Tibial artery (tissue), 4 donors: ENCODE measurements at regions of chrX and their contacts with region 1.

Region 1: DNA sequence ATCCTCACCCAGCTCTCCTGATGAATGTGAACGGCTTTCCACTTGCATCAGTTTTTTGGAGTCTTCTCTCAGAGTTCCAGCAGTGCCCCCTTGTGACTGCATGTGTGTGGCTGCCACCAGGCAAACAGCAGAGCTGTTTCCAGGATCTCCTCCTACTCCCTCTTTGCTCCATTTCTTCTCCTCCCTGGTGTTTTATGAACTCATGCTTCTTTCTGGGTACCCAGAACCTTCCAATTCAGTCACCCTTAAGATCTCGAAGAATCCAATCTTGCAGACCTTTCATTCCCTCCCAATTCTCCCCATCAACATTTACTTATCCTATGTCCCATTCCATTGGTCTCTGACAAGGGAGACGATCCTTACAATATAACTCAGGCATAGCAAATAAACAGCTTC is 6.8 kb upstream of the TCEANC start:
- DNase-seq: peak; percentile 58 to 67
- H3K4me3 ChIP-seq: no peak overlapping the region
- H3K27ac ChIP-seq: no peak overlapping the region
- H3K4me1 ChIP-seq: no peaks in the 10 kb centered on the region
- H3K27me3 ChIP-seq: no peaks in the 10 kb centered on the region
- CTCF ChIP-seq: peak; percentile 52 to 59

Region 2: DNA sequence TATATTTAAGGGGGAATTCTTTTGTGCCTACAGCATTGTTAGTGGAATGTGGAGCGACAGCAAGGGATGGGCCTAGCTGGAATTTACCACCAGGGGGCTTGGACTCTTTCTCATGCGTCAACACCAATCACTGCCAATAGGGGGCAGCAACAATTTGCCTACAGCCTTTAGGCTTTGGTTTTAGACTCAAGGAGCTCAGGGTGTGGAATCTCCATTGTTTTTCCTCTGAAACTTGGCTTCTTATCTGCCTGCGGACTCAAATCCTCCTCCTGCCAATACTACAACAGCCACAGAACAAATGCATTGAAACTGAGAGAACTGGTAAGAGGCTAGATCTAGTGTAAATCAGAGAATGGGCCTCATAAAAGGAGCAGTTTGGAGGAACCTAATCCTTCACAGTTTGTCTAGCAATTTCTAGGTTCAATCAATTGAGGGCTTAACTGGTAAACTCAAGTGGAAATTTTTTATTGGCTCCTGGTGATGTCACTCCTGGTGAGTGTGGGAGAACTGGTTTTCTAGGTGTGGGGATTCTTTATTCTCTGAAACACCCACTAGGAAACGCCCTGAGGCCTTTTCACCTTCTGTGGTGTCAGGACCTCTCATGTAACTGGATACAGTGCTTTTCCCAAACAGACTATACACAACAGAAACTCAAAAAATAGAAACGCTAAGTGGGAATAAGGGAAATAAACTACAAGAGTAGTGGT is 699.2 kb before region 1 on chrX:
- intact Hi-C with region 1: loop called (anchors 10 kb)
- DNase-seq: peak; percentile 54 to 76
- H3K4me3 ChIP-seq: no peak overlapping the region
- H3K27ac ChIP-seq: peak overlapping the region in 1 of 2 donors; percentile 39
- H3K4me1 ChIP-seq: peaks cover 0 to 12% (median 0%) of the 10 kb centered on the region in 4 donors
- H3K27me3 ChIP-seq: no peaks in the 10 kb centered on the region
- CTCF ChIP-seq: peak; percentile 62 to 74

Region 3: DNA sequence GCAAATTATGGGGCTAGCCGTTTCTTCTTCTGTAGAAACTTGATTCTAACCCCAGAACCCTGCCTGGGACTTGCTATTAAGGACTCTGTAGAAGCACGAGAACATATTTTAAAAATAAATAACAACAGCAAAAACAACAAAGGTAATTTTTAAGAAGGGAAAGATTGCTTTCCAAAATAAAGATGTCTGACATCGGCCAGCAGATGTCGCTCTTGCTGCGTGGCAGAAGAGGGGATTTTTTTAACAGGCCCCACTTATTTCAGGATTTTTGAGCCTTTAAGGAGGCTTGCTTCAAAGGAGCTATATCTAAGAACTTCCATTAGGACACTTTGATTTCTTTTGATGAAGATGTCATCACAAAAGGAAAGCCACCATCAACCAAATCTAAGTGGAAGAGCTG is 139.6 kb before region 1 on chrX:
- intact Hi-C with region 1: loop called (anchors 5 kb)
- DNase-seq: no peak
- H3K4me3 ChIP-seq: no peak overlapping the region
- H3K27ac ChIP-seq: no peak overlapping the region
- H3K4me1 ChIP-seq: no peaks in the 10 kb centered on the region
- H3K27me3 ChIP-seq: no peaks in the 10 kb centered on the region
- CTCF ChIP-seq: peak; percentile 66 to 70

Region 4: DNA sequence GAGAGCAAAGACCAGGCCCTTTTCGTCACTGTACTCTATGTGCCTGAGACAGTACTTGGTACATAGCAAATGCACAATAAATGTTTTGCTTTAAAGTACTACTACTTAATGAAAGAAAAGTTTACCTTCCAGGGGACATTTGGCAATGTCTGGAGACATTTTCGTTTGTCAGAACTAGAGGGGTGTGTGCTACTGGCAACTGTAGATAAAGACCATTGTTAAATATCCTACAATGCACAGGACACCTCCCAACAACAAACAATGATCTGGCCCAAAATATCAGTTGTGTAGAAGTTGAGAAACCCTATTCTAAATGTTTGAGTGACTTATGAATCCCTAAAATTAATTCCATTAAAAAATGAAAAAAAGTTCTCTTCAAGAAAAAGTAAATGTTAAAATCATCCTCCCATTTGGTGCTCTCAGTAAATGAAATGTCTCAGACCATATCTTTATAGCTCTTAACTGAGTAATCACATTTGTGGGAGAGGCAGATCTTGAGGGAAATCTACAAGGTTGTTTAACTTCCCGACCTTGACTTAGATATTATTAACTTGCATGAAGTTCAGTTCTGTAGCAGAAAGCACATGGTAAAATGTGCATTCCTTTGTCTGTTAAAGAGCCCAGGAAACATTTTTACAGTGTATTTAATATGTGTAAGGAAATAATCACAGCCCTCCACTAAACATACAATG is 58.2 kb before region 1 on chrX:
- intact Hi-C with region 1: no loop called
- DNase-seq: no peak
- H3K4me3 ChIP-seq: no peak overlapping the region
- H3K27ac ChIP-seq: no peak overlapping the region
- H3K4me1 ChIP-seq: no peaks in the 10 kb centered on the region
- H3K27me3 ChIP-seq: no peaks in the 10 kb centered on the region
- CTCF ChIP-seq: no peak

Region 5: GRCh38 chrX:13734278-13735172 is 88.4 kb after region 1 on chrX and contains the starts of genes OFD1 and TRAPPC2:
- intact Hi-C with region 1: no loop called
- DNase-seq: peak; percentile 91 to 94
- H3K4me3 ChIP-seq: peak within 1 kb of the TSS; percentile 77 to 83
- H3K27ac ChIP-seq: peak within 1 kb of the TSS; percentile 86 to 91
- H3K4me1 ChIP-seq: peaks cover 0 to 12% (median 3%) of the 10 kb centered on the region in 4 donors
- H3K27me3 ChIP-seq: no peaks in the 10 kb centered on the region
- CTCF ChIP-seq: no peak